ENCODE measurements at regions of chr19 and their contacts with region 1.

Region 1: GRCh38 chr19:18401580-18402112 is 4.2 kb upstream of the LRRC25 start:
- DNase-seq: peak; percentile 47 to 66
- ATAC-seq: peak; percentile 67 to 90 (median 83)
- H3K4me3 ChIP-seq: no peak overlapping the region
- H3K27ac ChIP-seq: peak overlapping the region in 3 of 10 donors; percentile 7 to 88 (median 26)
- H3K4me1 ChIP-seq: peaks cover 0 to 58% (median 0%) of the 10 kb centered on the region in 9 donors
- H3K27me3 ChIP-seq: peaks cover 0 to 15% (median 9%) of the 10 kb centered on the region in 7 donors
- CTCF ChIP-seq: peak in 7 of 9 donors; percentile 17 to 51 (median 38)

Region 2: GRCh38 chr19:18259893-18260292 is 141.8 kb before region 1 on chr19:
- intact Hi-C with region 1: loop called in 1 of 10 experiments (anchors 10 kb)
- DNase-seq: no peak
- ATAC-seq: no peak
- H3K4me3 ChIP-seq: no peak overlapping the region
- H3K27ac ChIP-seq: no peak overlapping the region
- H3K4me1 ChIP-seq: no peaks in the 10 kb centered on the region
- H3K27me3 ChIP-seq: peaks cover 0 to 8% (median 6%) of the 10 kb centered on the region in 7 donors
- CTCF ChIP-seq: no peak

Region 3: DNA sequence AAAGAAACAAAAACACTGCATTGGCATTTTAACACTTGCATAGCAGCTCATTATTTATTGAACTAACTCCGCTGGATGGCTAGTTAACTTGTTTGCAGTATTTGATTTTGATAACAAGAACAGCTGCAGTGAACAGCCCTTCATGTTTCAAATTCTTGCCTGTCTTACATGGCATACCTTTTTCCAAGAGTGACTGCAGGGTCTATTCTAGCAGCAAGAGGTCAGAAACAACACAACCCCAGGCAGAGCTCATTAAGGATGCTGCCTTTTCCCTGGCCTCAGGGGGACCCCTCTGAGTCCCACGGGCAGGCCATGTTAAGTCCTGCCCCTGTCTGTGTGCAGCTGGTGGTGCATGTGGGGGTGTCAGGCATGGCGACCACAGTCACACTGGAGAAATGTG is 44.6 kb before region 1 on chr19:
- intact Hi-C with region 1: loop called in 1 of 10 experiments (anchors 5 kb)
- DNase-seq: no peak
- ATAC-seq: no peak
- H3K4me3 ChIP-seq: no peak overlapping the region
- H3K27ac ChIP-seq: no peak overlapping the region
- H3K4me1 ChIP-seq: no peaks in the 10 kb centered on the region
- H3K27me3 ChIP-seq: no peaks in the 10 kb centered on the region
- CTCF ChIP-seq: no peak